Gastrocnemius medialis (tissue), 4 donors: ENCODE measurements at regions of chr1 and their contacts with region 1.

Region 1: GRCh38 chr1:225881969-225882693 is at the start of gene TMEM63A:
- DNase-seq: peak; percentile 86 to 92
- ATAC-seq: peak; percentile 70 to 73
- H3K4me3 ChIP-seq: peak within 1 kb of the TSS; percentile 77 to 99 (median 88)
- H3K27ac ChIP-seq: peak within 1 kb of the TSS; percentile 86 to 98 (median 89)
- H3K4me1 ChIP-seq: peaks cover 44 to 49% of the 10 kb centered on the region in 2 donors
- H3K27me3 ChIP-seq: no peaks in the 10 kb centered on the region
- CTCF ChIP-seq: peak; percentile 43 to 71 (median 55)
- POLR2A ChIP-seq: peak; percentile 72 to 77
- total RNA-seq, gene TMEM63A: 6.3 to 19.5 (median 10.6) TPM

Region 2: DNA sequence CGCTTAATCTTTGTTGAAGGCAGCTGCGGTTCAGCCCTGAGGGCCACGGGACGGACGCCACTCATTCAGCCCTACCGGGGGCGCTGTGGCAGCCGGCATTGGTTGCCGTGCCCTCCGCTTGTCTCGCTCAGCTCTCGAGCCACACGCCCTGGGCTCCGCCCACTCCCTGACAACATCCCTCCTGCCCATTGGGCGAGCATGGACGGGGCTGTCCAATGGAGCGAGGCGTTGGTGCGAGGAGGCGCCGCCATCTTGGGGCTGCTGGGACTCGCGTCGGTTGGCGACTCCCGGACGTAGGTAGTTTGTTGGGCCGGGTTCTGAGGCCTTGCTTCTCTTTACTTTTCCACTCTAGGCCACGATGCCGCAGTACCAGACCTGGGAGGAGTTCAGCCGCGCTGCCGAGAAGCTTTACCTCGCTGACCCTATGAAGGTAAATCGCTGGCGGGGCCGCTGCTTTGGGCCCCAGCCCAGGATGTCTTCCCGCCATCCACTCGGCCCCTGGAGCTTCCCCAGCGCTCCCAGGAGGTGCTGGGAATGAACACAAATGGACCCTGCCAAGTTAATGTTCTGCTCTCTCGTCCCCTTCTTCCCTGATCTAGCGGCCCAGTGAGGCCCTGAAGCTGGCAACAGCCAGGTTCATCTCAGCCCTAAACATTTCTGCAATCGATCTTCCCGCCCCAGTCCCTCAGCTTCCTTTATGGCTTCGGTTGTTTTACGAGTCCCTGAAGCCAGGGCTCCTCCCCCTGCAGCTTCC is 104.4 kb before region 1 on chr1 and contains the start of gene SRP9:
- in situ Hi-C with region 1: no loop called
- intact Hi-C with region 1: loop called (anchors 1 kb)
- DNase-seq: peak; percentile 98 to 99
- ATAC-seq: peak; percentile 97 to 98
- H3K4me3 ChIP-seq: peak within 1 kb of the TSS; percentile 78 to 98 (median 86)
- H3K27ac ChIP-seq: peak within 1 kb of the TSS; percentile 94 to 96 (median 95)
- H3K4me1 ChIP-seq: peaks cover 50% of the 10 kb centered on the region in 2 donors
- H3K27me3 ChIP-seq: no peaks in the 10 kb centered on the region
- CTCF ChIP-seq: peak; percentile 85 to 95 (median 89)
- POLR2A ChIP-seq: peak; percentile 73 to 85
- total RNA-seq, gene SRP9: 182 to 207 (median 198) TPM

Region 3: DNA sequence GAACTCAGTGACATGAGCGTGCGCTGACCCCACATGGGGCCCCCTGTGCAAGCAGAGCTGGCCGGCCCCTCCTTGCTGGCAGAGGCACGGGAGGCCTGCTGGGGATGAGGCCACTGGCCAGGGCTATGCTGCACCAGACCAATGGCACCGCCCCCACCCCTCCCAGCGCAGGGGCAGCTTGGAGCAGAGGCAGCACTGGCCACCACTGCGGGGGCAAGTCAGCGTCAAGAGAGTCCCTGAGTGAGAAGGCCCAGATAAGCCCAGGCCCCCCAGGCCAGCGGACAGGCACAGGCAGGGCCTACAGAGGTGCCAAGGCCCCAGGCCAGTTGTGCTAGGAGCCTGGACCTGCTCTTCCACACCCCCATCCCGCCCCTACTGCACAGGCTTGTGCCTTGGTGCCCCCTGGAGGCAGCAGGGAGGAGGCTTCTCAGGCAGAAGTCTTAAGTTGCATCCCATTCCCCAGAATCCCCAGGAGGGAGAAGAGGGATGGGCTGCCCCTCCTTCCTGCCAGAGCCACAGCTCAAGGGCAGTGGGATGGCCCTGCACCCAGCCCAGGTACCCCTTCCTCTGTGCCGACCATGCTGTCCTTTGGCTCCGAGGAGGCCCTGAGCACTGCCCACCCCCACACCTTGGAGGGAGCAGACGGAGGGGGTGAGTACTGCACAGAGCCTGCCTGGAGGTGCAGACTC is 36.4 kb before region 1 on chr1:
- in situ Hi-C with region 1: no loop called
- intact Hi-C with region 1: loop called (anchors 5 kb)
- DNase-seq: peak; percentile 52 to 74
- ATAC-seq: peak; percentile 49 to 83
- H3K4me3 ChIP-seq: no peak overlapping the region
- H3K27ac ChIP-seq: peak overlapping the region; percentile 15 to 61 (median 38)
- H3K4me1 ChIP-seq: peaks cover 3 to 5% of the 10 kb centered on the region in 2 donors
- H3K27me3 ChIP-seq: no peaks in the 10 kb centered on the region
- CTCF ChIP-seq: peak; percentile 62 to 83 (median 79)
- POLR2A ChIP-seq: no peak

Region 4: DNA sequence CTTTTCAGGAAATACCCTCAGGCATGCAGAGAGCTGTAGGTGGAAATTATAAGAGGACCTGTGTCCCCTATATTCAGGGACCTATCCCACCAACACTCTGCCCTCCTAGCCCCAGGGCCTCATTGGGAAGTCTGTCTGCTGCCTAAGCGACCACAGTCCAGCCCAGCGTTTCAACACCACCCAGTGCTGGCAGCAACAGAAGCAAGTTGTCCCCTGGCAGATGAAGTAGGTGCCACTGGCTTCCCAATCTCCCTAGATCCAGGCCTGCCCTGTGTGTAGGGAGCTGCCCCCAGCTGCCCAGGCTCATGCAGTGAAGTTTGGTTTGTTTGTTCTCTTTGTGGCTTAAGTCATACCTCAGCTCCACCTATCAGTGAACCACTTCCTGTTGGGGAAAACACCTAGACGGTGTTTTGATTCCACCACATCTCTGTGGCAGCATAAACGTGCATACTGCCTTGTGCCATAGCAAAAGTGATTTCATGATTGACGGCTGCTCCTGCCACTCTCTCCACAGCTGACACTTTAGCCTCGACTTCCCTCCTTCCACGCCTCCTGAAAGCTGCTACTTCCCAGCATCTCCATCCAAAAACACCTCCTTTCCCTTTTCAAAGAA is 14.9 kb after region 1 on chr1:
- in situ Hi-C with region 1: no loop called
- intact Hi-C with region 1: no loop called
- DNase-seq: no peak
- ATAC-seq: no peak
- H3K4me3 ChIP-seq: no peak overlapping the region
- H3K27ac ChIP-seq: no peak overlapping the region
- H3K4me1 ChIP-seq: no peaks in the 10 kb centered on the region
- H3K27me3 ChIP-seq: no peaks in the 10 kb centered on the region
- CTCF ChIP-seq: no peak
- POLR2A ChIP-seq: no peak

Region 5: DNA sequence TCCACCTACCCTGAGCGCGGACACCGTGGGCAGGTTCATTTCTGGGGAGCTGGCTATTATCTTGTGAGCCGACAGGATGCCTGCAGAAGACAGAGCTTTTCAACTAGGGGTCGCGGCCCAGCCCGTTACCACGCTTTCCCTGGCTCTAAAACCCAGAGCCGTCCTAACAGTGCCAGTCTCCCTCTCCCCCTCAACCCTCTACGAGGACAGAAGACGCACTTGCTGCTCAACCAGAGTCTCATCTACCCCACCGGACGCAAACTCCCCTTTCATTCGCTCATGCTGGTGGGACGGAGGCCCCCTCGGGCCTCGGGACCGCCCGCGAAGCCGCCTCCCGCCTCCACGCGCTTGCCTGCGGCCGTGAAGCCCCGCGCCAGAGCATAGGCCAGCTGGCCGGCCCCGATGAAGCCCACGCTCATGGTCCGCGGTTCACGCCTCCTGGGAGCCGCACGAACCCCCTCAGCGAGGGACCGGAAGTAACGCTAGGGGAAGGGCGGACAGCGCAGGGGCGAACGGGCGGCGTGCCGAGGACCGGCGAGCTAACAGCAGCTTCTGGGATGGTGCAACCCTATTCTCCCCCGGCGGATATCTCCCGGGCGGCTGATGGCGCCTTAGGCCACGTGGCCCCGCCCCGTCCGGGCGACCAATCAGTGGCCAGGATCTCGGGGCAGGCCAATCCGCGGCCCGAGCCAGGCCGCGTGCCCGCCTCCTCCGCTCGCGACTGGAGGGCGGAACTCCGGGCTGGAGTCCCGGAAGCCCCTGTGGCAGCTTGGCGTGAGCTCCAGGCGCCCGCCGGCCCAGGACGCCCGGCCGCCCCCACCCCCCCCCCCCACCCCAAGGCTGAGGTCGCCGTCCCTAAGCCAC is 41.8 kb after region 1 on chr1 and contains the start of gene PYCR2:
- in situ Hi-C with region 1: no loop called
- intact Hi-C with region 1: loop called (anchors 2 kb)
- DNase-seq: peak; percentile 91 to 97
- ATAC-seq: peak; percentile 96 to 97
- H3K4me3 ChIP-seq: peak within 1 kb of the TSS; percentile 93 to 100 (median 98)
- H3K27ac ChIP-seq: peak within 1 kb of the TSS; percentile 95 to 100 (median 98)
- H3K4me1 ChIP-seq: peaks cover 15 to 16% of the 10 kb centered on the region in 2 donors
- H3K27me3 ChIP-seq: no peaks in the 10 kb centered on the region
- CTCF ChIP-seq: no peak
- POLR2A ChIP-seq: peak; percentile 75 to 87
- total RNA-seq, gene PYCR2: 31.9 to 50.3 (median 42.5) TPM

Region 6: DNA sequence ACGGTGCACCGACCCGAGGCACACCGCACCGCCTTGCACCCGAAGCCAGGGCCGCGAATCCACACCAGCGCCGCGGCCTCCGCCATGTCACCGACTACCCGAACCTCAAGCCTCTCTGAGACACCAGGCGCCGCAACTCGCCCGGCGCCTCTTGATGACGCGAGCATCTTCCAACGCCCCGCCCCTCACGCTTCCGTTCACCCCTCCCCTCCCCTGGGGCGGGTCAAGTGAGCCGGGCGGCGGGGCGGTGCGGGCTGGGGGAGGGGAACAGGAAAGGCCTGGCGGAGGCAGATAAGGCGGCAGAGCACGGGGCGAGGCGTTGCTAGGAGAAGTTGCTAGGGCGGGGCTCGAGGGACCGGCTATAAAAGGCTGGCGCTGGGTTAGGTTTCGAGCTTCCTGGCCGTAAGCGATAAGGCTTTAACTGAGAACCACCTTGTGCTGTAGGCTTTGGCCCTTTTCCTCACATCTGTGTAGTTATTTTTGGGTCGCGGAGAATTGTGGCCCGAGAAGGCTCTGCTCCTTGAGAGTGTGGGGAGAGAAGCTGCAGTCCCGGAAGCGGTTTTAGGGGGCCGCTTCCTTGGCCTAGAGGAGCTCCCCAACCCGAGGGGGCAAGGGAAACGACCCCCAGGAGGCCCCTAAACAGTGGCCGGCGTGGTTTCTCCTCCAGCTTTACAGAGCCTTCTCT is 117.2 kb after region 1 on chr1 and contains the start of gene SDE2:
- in situ Hi-C with region 1: no loop called
- intact Hi-C with region 1: loop called (anchors 5 kb)
- DNase-seq: peak; percentile 100
- ATAC-seq: peak; percentile 85 to 87
- H3K4me3 ChIP-seq: peak within 1 kb of the TSS; percentile 73 to 90 (median 79)
- H3K27ac ChIP-seq: peak within 1 kb of the TSS; percentile 92 to 98 (median 93)
- H3K4me1 ChIP-seq: peaks cover 31 to 41% of the 10 kb centered on the region in 2 donors
- H3K27me3 ChIP-seq: no peaks in the 10 kb centered on the region
- CTCF ChIP-seq: no peak
- POLR2A ChIP-seq: peak; percentile 93 to 95
- total RNA-seq, gene SDE2: 20.1 to 30.0 (median 23.0) TPM